ENCODE measurements at regions of chr4 and their contacts with region 1.

Region 1: DNA sequence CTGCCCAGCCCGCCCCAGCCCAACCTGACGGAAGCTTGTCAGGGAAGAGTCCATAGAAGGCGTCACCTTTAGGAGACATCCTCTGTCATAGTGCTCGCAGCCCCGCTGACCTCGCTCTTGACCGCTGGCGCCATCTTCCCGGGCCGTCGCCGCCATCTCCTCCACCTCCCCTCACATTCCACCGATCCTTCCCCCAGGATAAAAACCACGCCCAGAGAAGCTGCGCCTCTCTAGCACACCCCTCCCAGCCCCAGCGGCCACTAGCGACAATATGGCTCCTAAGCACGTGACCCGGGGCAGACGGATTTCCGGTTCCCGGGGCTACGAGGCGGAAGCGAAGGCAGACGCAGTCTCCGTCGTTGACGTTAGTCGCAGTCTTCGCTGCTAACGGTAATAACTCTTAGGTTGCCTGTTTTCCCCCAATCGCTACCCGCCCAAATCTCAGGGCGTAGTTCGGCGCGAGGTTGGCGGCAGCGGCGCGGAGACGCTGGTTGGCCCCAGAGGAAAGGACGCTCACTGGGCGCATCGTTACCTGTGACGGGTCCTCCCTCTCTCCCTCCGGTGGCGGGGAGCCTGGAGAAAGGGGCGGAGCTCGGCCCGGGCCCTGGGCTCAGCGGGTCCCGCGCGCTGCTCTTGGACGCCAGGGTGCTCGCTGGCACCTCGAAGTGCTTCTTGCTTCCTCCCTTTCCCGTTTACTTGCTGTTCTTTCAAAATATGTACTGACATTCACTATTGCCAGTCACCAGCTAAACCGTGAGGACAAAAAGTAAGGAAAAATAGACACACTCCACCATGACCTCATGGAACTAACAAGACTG is at the starts of genes RCHY1 and THAP6:
- DNase-seq: peak; percentile 96
- ATAC-seq: peak; percentile 93
- H3K4me3 ChIP-seq: peak within 1 kb of the TSS; percentile 59 to 94
- H3K27ac ChIP-seq: peak within 1 kb of the TSS; percentile 78
- H3K4me1 ChIP-seq: peaks cover 8 to 24% of the 10 kb centered on the region in 2 experiments; a peak in 3 of 4 replicates
- H3K27me3 ChIP-seq: no peaks in the 10 kb centered on the region
- CTCF ChIP-seq: no peak
- POLR2A ChIP-seq: peak; percentile 66
- RAD21 ChIP-seq: no peak
- total RNA-seq, gene RCHY1: 33.4 TPM
- total RNA-seq, gene THAP6: 25.5 TPM

Region 2: DNA sequence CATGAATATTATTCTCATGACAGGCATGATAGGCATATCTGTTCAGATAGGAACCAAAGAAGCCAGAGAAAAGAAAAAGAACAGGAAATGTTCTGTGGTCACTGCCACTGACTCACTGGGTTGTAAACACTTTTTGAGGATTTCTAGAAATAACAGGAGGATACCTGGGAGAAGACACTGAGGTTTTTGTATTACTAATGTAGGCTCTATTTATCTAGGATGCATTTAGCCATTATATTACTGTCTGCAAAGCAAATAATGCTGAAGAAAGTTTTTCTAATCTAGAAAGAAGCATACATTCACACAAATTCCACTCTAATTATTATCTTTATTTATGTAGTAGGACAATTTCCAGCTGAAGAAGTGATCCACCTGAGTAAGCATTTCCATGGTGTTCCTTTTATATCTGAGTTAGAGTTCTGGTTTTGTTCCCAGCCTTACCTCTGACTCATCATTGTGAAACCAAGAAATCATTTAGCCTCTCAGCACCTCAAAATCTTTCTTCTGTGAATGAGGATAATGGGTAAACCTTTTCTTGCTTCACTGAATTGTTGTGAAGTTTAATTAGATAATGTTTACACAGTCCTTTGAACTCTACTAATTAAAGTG is 1246.2 kb before region 1 on chr4:
- CTCF ChIA-PET with region 1: no interaction called
- POLR2A ChIA-PET with region 1: no interaction called
- RAD21 ChIA-PET with region 1: no interaction called
- intact Hi-C with region 1: loop called (anchors 5 kb)
- DNase-seq: peak; percentile 87
- ATAC-seq: peak; percentile 81
- H3K4me3 ChIP-seq: peak overlapping the region in 1 of 2 experiments; percentile 36; a peak in 2 of 4 replicates
- H3K27ac ChIP-seq: peak overlapping the region; percentile 90
- H3K4me1 ChIP-seq: peaks cover 20 to 48% of the 10 kb centered on the region in 2 experiments
- H3K27me3 ChIP-seq: no peaks in the 10 kb centered on the region
- CTCF ChIP-seq: no peak
- POLR2A ChIP-seq: no peak
- RAD21 ChIP-seq: no peak; the same call in 1 of the 2 replicates

Region 3: DNA sequence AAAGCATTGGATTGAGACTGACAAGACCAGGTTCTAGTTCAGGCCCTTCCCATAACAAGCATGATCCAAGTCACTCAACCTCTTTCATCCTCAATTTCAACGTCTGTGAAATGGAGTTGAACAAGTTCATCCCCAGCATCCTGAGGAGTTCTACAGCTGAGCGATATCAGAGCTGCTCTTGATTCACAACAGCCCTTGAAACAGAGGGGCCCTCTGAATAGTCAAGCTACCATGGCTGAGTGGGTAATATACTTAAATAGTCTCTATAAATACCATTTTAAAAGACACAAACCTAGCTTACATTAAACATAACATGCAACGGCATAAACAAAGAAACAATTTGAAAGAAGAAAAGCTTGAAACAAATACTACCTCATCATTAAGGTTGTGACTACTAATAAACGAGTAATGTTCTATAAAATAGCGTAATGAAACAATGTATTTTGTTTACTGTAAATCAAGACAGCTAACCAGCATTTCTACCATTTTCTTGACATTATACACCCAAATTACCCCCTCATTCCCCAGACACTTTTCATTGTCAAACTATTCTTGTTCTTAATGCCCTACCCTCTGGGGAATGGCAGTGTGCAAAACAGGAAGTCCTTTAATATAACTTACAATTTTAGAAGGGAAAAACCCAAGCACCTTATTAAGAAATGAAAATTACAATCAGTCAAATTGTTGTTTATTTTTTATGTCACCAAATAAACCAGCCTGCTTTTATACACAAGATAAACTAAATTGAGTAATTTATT is 379.1 kb before region 1 on chr4:
- CTCF ChIA-PET with region 1: no interaction called
- POLR2A ChIA-PET with region 1: no interaction called
- RAD21 ChIA-PET with region 1: no interaction called
- intact Hi-C with region 1: no loop called
- DNase-seq: no peak
- ATAC-seq: no peak
- H3K4me3 ChIP-seq: no peak overlapping the region
- H3K27ac ChIP-seq: no peak overlapping the region
- H3K4me1 ChIP-seq: no peaks in the 10 kb centered on the region
- H3K27me3 ChIP-seq: no peaks in the 10 kb centered on the region
- CTCF ChIP-seq: no peak
- POLR2A ChIP-seq: no peak
- RAD21 ChIP-seq: no peak

Region 4: GRCh38 chr4:75302648-75303047 is 211.7 kb before region 1 on chr4:
- CTCF ChIA-PET with region 1: no interaction called
- POLR2A ChIA-PET with region 1: no interaction called
- RAD21 ChIA-PET with region 1: no interaction called
- intact Hi-C with region 1: no loop called
- DNase-seq: no peak
- ATAC-seq: no peak
- H3K4me3 ChIP-seq: no peak overlapping the region
- H3K27ac ChIP-seq: no peak overlapping the region
- H3K4me1 ChIP-seq: no peaks in the 10 kb centered on the region
- H3K27me3 ChIP-seq: peaks cover 17% of the 10 kb centered on the region; the same call in 1 of the 2 replicates
- CTCF ChIP-seq: no peak
- POLR2A ChIP-seq: no peak
- RAD21 ChIP-seq: no peak